CD8-positive, alpha-beta T cell (primary cell): ENCODE measurements at regions of chr5 and their contacts with region 1.

Region 1: DNA sequence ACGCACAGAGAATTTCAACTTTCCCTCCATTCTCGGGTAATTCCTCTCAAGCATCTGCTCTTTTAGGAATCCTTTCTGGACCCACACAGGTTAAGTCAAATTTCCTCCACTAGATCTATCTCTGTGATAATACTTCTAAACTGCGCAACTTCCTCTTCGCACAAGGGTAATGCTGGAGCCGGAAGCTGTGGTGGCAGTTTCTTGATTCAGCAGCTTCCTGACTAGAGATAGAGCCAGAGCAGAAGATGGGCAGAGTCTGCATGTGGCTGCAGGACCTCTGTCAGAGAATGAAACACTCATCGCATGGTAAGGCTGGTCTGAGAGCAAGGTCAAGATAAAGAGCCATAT is 11.1 kb upstream of the CDC42SE2 start:
- DNase-seq: peak; percentile 63 to 95 (median 82)
- ATAC-seq: peak; percentile 75
- H3K4me3 ChIP-seq: peak overlapping the region; percentile 41 to 53
- H3K4me3 Mint-ChIP-seq: peak overlapping the region; percentile 94
- H3K27ac ChIP-seq: peak overlapping the region; percentile 55 to 89
- H3K27ac Mint-ChIP-seq: peak overlapping the region; percentile 95
- H3K4me1 ChIP-seq: peaks cover 60% of the 10 kb centered on the region
- H3K4me1 Mint-ChIP-seq: peaks cover 73% of the 10 kb centered on the region
- H3K27me3 ChIP-seq: no peaks in the 10 kb centered on the region
- H3K27me3 Mint-ChIP-seq: no peaks in the 10 kb centered on the region
- CTCF ChIP-seq: no peak

Region 2: GRCh38 chr5:131165119-131165727 is 87.6 kb before region 1 on chr5 and contains the start of gene HINT1:
- CTCF ChIA-PET with region 1: interaction called, 5 read pairs
- POLR2A ChIA-PET with region 1: interaction called, 9 read pairs
- intact Hi-C with region 1: loop called (anchors 1 to 5 kb)
- DNase-seq: peak; percentile 81 to 96 (median 93)
- ATAC-seq: peak; percentile 83
- H3K4me3 ChIP-seq: peak within 1 kb of the TSS; percentile 85 to 90
- H3K4me3 Mint-ChIP-seq: peak within 1 kb of the TSS; percentile 95
- H3K27ac ChIP-seq: peak within 1 kb of the TSS; percentile 85 to 91
- H3K27ac Mint-ChIP-seq: peak within 1 kb of the TSS; percentile 98
- H3K4me1 ChIP-seq: peaks cover 40% of the 10 kb centered on the region
- H3K4me1 Mint-ChIP-seq: peaks cover 49% of the 10 kb centered on the region
- H3K27me3 ChIP-seq: no peaks in the 10 kb centered on the region
- H3K27me3 Mint-ChIP-seq: no peaks in the 10 kb centered on the region
- CTCF ChIP-seq: no peak
- total RNA-seq, gene HINT1: 243 to 252 TPM

Region 3: DNA sequence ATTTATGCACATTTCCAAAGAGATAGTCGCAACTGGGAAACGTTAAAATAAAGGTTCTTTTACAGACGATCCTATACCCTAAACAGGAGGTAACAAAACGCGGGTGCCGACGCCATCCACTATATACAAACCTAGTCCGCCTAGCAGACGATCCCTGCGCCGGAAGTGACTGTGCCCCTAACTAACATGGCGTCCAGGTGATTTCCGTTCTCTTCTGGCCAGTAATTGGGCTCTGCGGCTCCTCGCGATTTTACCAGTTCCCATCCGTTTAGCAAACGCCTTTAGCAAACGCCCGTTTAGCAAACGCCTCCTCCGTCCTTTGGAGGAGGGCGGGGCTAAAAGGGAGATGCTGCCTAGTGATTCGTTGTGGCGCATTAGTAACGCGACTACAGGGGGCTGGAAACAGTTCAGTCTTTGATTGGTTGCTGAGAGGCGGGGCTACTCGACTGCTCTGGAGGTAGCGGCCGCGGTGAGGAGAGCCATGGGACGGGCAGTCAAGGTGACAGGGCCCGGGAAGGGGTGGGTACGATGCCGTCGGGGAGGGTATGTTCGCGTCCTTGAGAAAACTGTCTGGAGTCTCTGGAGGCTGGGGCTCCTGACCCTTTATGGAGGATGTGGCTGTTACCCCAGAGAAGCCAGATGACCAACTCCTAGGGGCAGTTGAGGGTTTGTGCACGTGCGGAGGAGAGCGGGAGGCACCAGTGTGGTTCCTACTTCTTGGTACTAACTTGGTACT is 82.1 kb before region 1 on chr5 and contains the start of gene LYRM7:
- CTCF ChIA-PET with region 1: interaction called, 3 read pairs
- POLR2A ChIA-PET with region 1: interaction called, 9 read pairs
- intact Hi-C with region 1: loop called (anchors 1 to 5 kb)
- DNase-seq: peak; percentile 89 to 99 (median 93)
- ATAC-seq: peak; percentile 95
- H3K4me3 ChIP-seq: peak within 1 kb of the TSS; percentile 64 to 76
- H3K4me3 Mint-ChIP-seq: peak within 1 kb of the TSS; percentile 100
- H3K27ac ChIP-seq: peak within 1 kb of the TSS; percentile 73 to 81
- H3K27ac Mint-ChIP-seq: peak within 1 kb of the TSS; percentile 99
- H3K4me1 ChIP-seq: peaks cover 22% of the 10 kb centered on the region
- H3K4me1 Mint-ChIP-seq: peaks cover 45% of the 10 kb centered on the region
- H3K27me3 ChIP-seq: no peaks in the 10 kb centered on the region
- H3K27me3 Mint-ChIP-seq: no peaks in the 10 kb centered on the region
- CTCF ChIP-seq: no peak
- total RNA-seq, gene LYRM7: 8.7 to 8.9 TPM

Region 4: GRCh38 chr5:131209506-131210150 is 43.2 kb before region 1 on chr5:
- CTCF ChIA-PET with region 1: interaction called, 5 read pairs
- POLR2A ChIA-PET with region 1: interaction called, 8 read pairs
- intact Hi-C with region 1: loop called (anchors 1 to 2 kb)
- DNase-seq: peak; percentile 14 to 93 (median 55)
- ATAC-seq: peak; percentile 94
- H3K4me3 ChIP-seq: peak overlapping the region; percentile 2 to 13
- H3K4me3 Mint-ChIP-seq: peak overlapping the region; percentile 72
- H3K27ac ChIP-seq: peak overlapping the region; percentile 51 to 83
- H3K27ac Mint-ChIP-seq: peak overlapping the region; percentile 97
- H3K4me1 ChIP-seq: peaks cover 61% of the 10 kb centered on the region
- H3K4me1 Mint-ChIP-seq: peaks cover 60% of the 10 kb centered on the region
- H3K27me3 ChIP-seq: no peaks in the 10 kb centered on the region
- H3K27me3 Mint-ChIP-seq: no peaks in the 10 kb centered on the region
- CTCF ChIP-seq: no peak

Region 5: GRCh38 chr5:131270809-131271208 is 18.0 kb after region 1 on chr5:
- CTCF ChIA-PET with region 1: interaction called, 43 read pairs
- POLR2A ChIA-PET with region 1: interaction called, 239 read pairs
- intact Hi-C with region 1: loop called in 1 of 2 experiments (anchors 2 kb)
- DNase-seq: peak in 1 of 9 experiments; percentile 15
- ATAC-seq: no peak
- H3K4me3 ChIP-seq: peak overlapping the region; percentile 2 to 39
- H3K4me3 Mint-ChIP-seq: peak overlapping the region; percentile 82
- H3K27ac ChIP-seq: peak overlapping the region; percentile 32 to 93
- H3K27ac Mint-ChIP-seq: peak overlapping the region; percentile 93
- H3K4me1 ChIP-seq: peaks cover 68% of the 10 kb centered on the region
- H3K4me1 Mint-ChIP-seq: peaks cover 71% of the 10 kb centered on the region
- H3K27me3 ChIP-seq: no peaks in the 10 kb centered on the region
- H3K27me3 Mint-ChIP-seq: no peaks in the 10 kb centered on the region
- CTCF ChIP-seq: no peak

Region 6: DNA sequence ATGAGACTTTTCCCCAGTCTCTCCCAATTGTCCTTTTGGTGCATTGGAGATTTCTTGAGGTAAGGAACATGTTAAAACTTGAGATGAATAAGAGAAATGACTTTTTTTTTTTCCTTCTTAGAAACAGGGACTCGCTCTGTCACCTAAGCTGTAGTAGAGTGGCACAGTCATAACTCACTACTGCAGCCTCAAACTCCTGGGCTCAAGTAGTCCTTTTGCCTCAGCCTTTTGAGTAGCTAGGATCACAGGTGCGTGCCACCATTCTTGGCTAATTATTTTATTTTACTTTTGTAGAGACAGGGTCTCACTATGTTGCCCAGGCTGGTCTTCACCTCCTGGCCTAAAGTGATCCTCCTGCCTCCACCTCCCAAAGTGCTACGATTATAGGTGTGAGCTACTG is 36.9 kb after region 1 on chr5:
- CTCF ChIA-PET with region 1: interaction called, 8 read pairs
- POLR2A ChIA-PET with region 1: interaction called, 239 read pairs
- intact Hi-C with region 1: loop called in 1 of 2 experiments (anchors 5 kb)
- DNase-seq: peak in 2 of 9 experiments; percentile 34 to 57
- ATAC-seq: peak; percentile 52
- H3K4me3 ChIP-seq: peak overlapping the region; percentile 4 to 42
- H3K4me3 Mint-ChIP-seq: peak overlapping the region; percentile 76
- H3K27ac ChIP-seq: peak overlapping the region; percentile 21 to 79
- H3K27ac Mint-ChIP-seq: peak overlapping the region; percentile 91
- H3K4me1 ChIP-seq: peaks cover 87% of the 10 kb centered on the region
- H3K4me1 Mint-ChIP-seq: peaks cover 72% of the 10 kb centered on the region
- H3K27me3 ChIP-seq: no peaks in the 10 kb centered on the region
- H3K27me3 Mint-ChIP-seq: no peaks in the 10 kb centered on the region
- CTCF ChIP-seq: no peak